ENCODE measurements at regions of chr5 and their contacts with region 1.

Region 1: GRCh38 chr5:154754460-154755360 is 467 bp upstream of the LARP1 start:
- DNase-seq: peak; percentile 100
- H3K4me3 ChIP-seq: peak overlapping the region; percentile 99
- H3K27ac ChIP-seq: peak overlapping the region; percentile 95 to 96
- H3K4me1 ChIP-seq: peaks cover 6% of the 10 kb centered on the region
- H3K27me3 ChIP-seq: no peaks in the 10 kb centered on the region
- CTCF ChIP-seq: peak; percentile 30 to 72 (median 47)
- EP300 ChIP-seq: peak; percentile 68
- POLR2A ChIP-seq: peak; percentile 84

Region 2: DNA sequence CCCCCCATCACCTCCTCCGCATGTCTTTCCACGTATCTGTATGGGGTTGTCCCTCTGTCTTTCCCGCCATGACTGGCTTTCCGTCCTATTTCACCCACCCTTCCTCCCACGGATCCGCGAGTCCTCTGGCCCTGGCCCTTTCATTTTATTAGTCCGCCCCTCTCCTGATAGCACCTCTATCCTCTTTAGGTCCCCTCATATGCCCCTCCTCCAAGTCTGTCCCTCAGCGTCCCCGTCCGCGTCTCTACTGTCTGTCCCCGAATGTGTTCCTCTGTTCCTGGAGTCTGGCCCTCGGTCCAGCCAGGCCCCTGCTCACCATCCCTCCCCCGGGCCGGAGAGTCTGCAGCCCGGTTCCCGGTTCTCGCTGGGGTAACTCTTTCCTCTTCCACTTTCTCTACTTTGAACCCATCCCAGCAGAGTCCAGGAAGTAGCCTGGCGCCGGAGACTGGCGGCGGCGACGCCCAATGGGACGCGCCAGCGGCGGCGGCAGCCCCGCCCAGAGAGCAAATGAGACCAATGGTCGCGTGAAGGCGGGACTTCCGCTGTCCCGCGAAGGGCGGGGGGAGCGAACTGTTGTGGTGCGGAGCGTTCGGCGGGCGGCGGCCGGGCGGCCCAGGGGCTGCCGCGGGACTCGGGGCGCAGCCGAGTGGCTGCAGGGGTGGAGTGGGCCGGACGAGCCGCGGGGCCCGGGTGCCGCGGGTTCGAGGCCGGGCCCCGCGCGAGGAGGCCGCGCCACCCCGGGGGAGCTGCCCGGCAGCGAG is 309.1 kb before region 1 on chr5 and contains the start of gene SAP30L:
- intact Hi-C with region 1: loop called in 1 of 4 experiments (anchors 5 kb)
- DNase-seq: peak; percentile 95 to 99 (median 96)
- H3K4me3 ChIP-seq: peak within 1 kb of the TSS; percentile 99
- H3K27ac ChIP-seq: peak within 1 kb of the TSS; percentile 66 to 95
- H3K4me1 ChIP-seq: peaks cover 12% of the 10 kb centered on the region
- H3K27me3 ChIP-seq: no peaks in the 10 kb centered on the region
- CTCF ChIP-seq: no peak
- EP300 ChIP-seq: no peak
- POLR2A ChIP-seq: no peak
- total RNA-seq, gene SAP30L: 18.7 to 63.1 (median 41.5) TPM

Region 3: GRCh38 chr5:154654486-154655371 is 100.0 kb before region 1 on chr5:
- intact Hi-C with region 1: loop called in 1 of 4 experiments (anchors 10 kb)
- DNase-seq: no peak
- H3K4me3 ChIP-seq: peak overlapping the region; percentile 20
- H3K27ac ChIP-seq: peak overlapping the region in 1 of 2 donors; percentile 50
- H3K4me1 ChIP-seq: peaks cover 8% of the 10 kb centered on the region
- H3K27me3 ChIP-seq: no peaks in the 10 kb centered on the region
- CTCF ChIP-seq: no peak
- EP300 ChIP-seq: no peak
- POLR2A ChIP-seq: no peak

Region 4: DNA sequence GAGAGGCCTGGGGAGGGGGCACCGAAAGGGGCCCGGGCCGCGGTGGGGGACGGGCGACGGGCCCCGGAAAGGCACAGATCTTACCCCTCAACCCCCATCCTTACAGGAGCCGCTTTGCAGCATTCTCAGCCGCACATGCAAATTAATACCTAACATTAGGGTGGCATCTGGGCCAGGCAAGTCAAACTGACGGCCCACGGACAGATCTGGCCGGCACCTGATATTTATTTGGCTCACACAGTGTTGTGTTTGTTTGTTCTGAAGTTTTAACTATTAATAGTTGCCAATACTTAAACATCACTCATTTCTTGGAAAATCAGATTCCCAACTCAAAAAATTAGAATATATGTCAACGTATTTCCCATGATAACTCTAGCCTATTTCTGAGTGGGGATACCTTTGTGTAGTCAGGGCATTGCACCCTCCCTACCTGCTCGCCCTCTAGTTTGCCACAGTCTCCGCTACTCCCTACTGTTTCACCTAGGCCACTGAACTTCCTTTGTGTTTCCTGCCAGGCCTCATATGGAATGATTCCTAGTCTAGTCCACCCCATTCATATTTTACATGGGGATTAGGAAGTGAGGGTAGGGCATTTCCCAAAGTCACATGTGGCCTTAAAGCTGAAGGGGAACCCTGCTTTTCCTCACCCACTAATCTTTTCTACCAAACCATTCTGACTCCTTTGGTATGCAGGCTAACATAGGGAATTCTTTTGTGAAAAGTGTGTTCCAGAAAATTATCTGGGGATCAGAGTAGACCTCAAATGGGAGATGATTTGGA is 71.4 kb before region 1 on chr5:
- intact Hi-C with region 1: loop called in 2 of 4 experiments (anchors 10 kb)
- DNase-seq: no peak
- H3K4me3 ChIP-seq: peak overlapping the region; percentile 37
- H3K27ac ChIP-seq: no peak overlapping the region
- H3K4me1 ChIP-seq: no peaks in the 10 kb centered on the region
- H3K27me3 ChIP-seq: no peaks in the 10 kb centered on the region
- CTCF ChIP-seq: no peak
- EP300 ChIP-seq: no peak
- POLR2A ChIP-seq: no peak

Region 5: DNA sequence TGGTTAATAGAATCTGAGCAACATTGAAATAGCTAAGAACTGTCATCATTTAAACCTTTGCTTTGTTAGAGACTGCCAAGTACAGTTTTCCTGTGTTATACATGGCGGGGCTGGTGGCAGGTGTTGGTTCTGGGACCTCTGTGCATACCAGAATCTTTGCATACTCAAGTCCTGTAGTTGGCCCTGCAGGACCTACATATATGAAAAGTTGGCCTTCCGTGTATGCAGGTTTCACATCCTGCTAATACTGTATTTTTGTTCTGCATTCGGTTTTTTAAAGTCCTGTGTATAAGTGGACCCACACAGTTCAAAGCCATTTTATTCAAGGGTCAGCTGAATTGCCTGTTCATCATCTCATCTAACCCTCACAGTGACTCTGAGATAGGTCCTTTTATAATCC is 36.8 kb after region 1 on chr5:
- intact Hi-C with region 1: loop called in 1 of 4 experiments (anchors 5 kb)
- DNase-seq: no peak
- H3K4me3 ChIP-seq: no peak overlapping the region
- H3K27ac ChIP-seq: no peak overlapping the region
- H3K4me1 ChIP-seq: peaks cover 27% of the 10 kb centered on the region
- H3K27me3 ChIP-seq: no peaks in the 10 kb centered on the region
- CTCF ChIP-seq: no peak
- EP300 ChIP-seq: no peak
- POLR2A ChIP-seq: no peak

Region 6: GRCh38 chr5:154840435-154841272 is 85.9 kb after region 1 on chr5:
- intact Hi-C with region 1: no loop called
- DNase-seq: no peak
- H3K4me3 ChIP-seq: no peak overlapping the region
- H3K27ac ChIP-seq: no peak overlapping the region
- H3K4me1 ChIP-seq: peaks cover 5% of the 10 kb centered on the region
- H3K27me3 ChIP-seq: no peaks in the 10 kb centered on the region
- CTCF ChIP-seq: no peak
- EP300 ChIP-seq: no peak
- POLR2A ChIP-seq: no peak

Region 7: GRCh38 chr5:154857530-154858296 is 103.0 kb after region 1 on chr5:
- intact Hi-C with region 1: loop called (anchors 5 to 10 kb)
- DNase-seq: peak; percentile 97 to 99 (median 98)
- H3K4me3 ChIP-seq: peak overlapping the region; percentile 63
- H3K27ac ChIP-seq: peak overlapping the region; percentile 94 to 99
- H3K4me1 ChIP-seq: peaks cover 11% of the 10 kb centered on the region
- H3K27me3 ChIP-seq: no peaks in the 10 kb centered on the region
- CTCF ChIP-seq: peak; percentile 1 to 25 (median 18)
- EP300 ChIP-seq: no peak
- POLR2A ChIP-seq: peak; percentile 70

Measured in ovary (tissue), 10 donors.